OCI-LY7 (cell line): ENCODE measurements at regions of chr14 and their contacts with region 1.

Region 1: DNA sequence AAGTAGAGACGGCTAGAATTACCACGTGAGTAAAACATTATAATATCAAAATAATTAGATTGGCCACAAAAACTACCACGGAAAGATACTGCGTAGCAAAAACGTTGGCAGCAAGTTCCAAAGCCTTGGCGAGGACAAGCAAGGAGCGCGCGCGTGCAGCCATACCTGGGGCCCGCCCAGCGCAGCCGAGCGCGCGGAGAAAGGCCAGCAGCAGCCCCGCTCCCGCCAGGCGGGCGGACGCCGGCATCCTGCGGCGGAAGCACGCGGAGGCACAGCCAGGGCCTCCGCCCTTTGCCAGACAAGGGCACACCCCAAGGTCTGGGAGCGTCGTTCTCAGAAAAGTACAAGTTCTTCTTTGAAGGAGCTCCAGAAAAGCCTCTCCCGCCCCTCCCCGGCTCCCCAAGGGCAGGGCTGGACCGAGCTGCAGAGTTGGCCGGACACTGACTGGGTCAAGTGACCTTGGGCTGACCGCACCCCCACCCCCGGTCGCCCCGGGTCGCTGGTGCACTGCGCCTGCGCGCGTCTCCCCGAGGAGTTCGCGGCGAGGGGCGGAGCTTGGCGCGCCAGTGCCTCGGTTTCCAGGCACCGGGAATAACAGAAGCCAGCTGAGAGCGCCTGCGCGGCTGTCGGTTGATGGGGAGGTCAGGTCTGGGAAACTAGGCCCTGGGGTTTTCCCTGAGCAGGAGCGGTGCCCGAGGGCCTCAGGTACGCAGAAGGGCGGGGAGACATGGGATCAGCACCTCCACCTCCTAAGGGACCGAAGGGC is at the start of gene ZC2HC1C:
- DNase-seq: peak; percentile 86
- H3K4me3 ChIP-seq: peak within 1 kb of the TSS; percentile 71
- H3K27ac ChIP-seq: peak within 1 kb of the TSS; percentile 47
- H3K4me1 ChIP-seq: peaks cover 27% of the 10 kb centered on the region
- CTCF ChIP-seq: no peak
- total RNA-seq, gene ZC2HC1C: 3.2 and 3.4 TPM in 2 replicates

Region 2: DNA sequence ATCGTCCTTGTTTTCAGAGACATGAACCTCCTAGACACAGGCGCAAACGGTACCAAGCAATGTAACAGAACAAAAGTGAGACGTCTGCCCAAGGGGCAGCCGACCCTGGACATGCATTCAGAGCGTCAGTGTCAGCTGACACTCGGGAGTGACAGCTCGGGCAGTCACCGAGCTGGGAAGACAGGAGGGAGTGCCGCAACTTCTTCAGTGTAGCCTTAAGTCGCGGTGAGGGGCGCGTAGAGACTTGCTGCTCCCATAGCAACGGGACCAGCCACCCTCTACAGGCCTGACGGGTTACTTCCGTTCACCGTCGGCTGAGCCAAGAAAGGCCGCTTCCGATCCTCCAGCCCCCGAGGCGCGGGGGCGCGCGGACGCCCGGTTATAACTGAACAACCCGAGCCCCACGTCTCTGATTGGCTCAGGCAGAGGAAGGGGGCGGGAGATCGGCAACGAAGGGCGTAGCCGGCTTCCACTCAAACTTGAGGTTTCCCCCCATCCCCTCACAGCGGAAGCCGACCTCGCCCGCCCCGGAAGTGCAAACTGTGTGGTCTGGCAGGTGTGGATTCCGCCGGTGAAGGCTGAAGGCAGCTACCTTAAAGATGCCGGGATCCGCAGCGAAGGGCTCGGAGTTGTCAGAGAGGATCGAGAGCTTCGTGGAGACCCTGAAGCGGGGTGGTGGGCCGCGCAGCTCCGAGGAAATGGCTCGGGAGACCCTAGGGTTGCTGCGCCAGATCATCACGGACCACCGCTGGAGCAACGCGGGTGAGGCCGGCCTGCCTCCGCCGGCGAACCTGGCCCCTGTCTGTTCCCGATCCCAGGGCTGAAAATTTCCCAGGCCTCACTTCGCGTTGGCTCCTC is 66.6 kb before region 1 on chr14 and contains the start of gene EIF2B2:
- CTCF ChIA-PET with region 1: no interaction called
- POLR2A ChIA-PET with region 1: interaction called, 3 read pairs
- intact Hi-C with region 1: loop called (anchors 1 kb)
- DNase-seq: peak; percentile 99
- H3K4me3 ChIP-seq: peak within 1 kb of the TSS; percentile 92
- H3K27ac ChIP-seq: peak within 1 kb of the TSS; percentile 64
- H3K4me1 ChIP-seq: peaks cover 15% of the 10 kb centered on the region
- CTCF ChIP-seq: no peak
- total RNA-seq, gene EIF2B2: 33.5 and 42.0 TPM in 2 replicates